SK-N-SH (cell line): ENCODE measurements at regions of chr21 and their contacts with region 1.

Region 1: GRCh38 chr21:38126669-38127303 is 130.0 kb upstream of the KCNJ15 start:
- DNase-seq: peak; percentile 57
- H3K4me3 ChIP-seq: 0 out of 4 replicates have a peak overlapping the region, but pooled peaks of 1 of the 2 experiments have one; percentile 39
- H3K27ac ChIP-seq: no peak overlapping the region
- H3K4me1 ChIP-seq: no peaks in the 10 kb centered on the region
- H3K27me3 ChIP-seq: peaks cover 16% of the 10 kb centered on the region; the same call in 1 of the 2 replicates
- CTCF ChIP-seq: peak; percentile 78
- EP300 ChIP-seq: no peak
- RAD21 ChIP-seq: peak; percentile 74

Region 2: GRCh38 chr21:37415939-37416338 is 710.8 kb before region 1 on chr21:
- CTCF ChIA-PET with region 1: no interaction called
- POLR2A ChIA-PET with region 1: no interaction called
- DNase-seq: no peak
- H3K4me3 ChIP-seq: no peak overlapping the region
- H3K27ac ChIP-seq: no peak overlapping the region
- H3K4me1 ChIP-seq: peaks cover 8 to 21% of the 10 kb centered on the region in 2 experiments
- H3K27me3 ChIP-seq: no peaks in the 10 kb centered on the region
- CTCF ChIP-seq: no peak
- EP300 ChIP-seq: no peak
- RAD21 ChIP-seq: no peak

Region 3: DNA sequence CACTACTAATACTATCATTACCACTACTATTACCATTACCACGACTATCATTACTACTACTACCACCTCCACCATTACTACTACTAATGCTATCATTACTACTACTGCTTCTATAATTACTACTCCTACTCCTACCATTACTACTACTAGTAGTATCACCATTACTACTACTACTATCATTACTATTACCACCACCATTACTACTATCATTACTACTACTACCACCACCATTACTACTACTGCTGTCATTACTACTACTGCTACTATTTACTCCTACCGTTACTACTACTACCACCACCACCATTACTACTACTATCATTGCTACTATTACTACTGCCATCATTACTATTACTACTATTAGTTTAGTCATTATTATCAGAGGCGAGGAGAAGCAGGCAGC is 10.9 kb before region 1 on chr21:
- CTCF ChIA-PET with region 1: interaction called, 18 read pairs
- POLR2A ChIA-PET with region 1: no interaction called
- DNase-seq: no peak
- H3K4me3 ChIP-seq: no peak overlapping the region
- H3K27ac ChIP-seq: no peak overlapping the region
- H3K4me1 ChIP-seq: no peaks in the 10 kb centered on the region
- H3K27me3 ChIP-seq: no peaks in the 10 kb centered on the region
- CTCF ChIP-seq: no peak
- EP300 ChIP-seq: no peak
- RAD21 ChIP-seq: no peak

Region 4: DNA sequence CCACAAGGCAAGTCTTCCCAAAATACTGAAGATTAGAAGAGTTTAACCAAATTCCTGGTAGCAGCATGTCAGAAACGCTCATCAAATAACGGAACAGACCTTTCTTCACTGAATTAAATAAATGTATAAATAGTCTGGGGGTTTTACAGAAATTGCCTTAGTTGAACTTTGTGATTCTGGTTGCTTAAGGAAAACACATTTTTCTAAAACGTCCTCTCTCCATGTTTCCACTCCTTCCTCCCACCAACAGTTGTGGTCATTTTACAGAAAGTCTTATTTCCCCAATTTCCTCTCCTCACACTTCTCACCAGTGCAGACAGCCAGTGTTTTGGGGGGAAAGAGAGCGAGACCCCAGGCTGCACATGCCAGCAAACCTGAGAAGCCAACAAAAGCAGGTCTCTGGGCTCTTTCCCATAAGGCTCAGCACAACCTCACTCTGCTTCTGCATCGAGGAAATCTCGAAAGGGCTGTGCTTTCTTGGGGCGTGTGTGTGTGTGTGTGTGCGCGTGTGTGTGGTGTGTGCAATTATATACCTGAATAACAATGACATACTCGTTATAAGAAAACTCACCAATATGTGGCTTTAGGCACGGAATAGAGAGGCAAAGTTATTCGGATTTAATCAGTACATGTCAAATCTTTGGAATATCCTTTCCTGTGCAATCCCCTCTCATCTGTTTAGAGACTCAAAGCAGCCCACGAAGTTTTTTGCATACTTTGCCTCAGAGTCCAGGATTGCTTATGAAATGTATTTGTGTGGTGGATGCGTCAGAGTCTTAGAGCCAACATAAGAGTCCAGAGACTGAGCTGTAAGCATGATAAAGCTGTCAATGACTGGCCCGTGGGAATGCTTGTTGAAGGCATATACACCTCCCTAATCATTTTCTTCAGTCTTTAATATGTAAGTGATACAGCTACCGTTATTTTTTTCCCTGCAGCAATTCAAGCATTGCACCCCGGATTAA is 132.0 kb after region 1 on chr21:
- CTCF ChIA-PET with region 1: no interaction called
- POLR2A ChIA-PET with region 1: no interaction called
- DNase-seq: no peak
- H3K4me3 ChIP-seq: no peak overlapping the region
- H3K27ac ChIP-seq: no peak overlapping the region
- H3K4me1 ChIP-seq: no peaks in the 10 kb centered on the region
- H3K27me3 ChIP-seq: no peaks in the 10 kb centered on the region
- CTCF ChIP-seq: no peak
- EP300 ChIP-seq: no peak
- RAD21 ChIP-seq: no peak